ENCODE measurements at regions of chr6 and their contacts with region 1.

Region 1: GRCh38 chr6:30102970-30103874 is 9.7 kb downstream of the TRIM31 start:
- DNase-seq: peak; percentile 87
- H3K4me3 Mint-ChIP-seq: peak overlapping the region; percentile 77
- H3K27ac Mint-ChIP-seq: peak overlapping the region; percentile 73
- H3K4me1 Mint-ChIP-seq: peaks cover 42% of the 10 kb centered on the region
- H3K27me3 Mint-ChIP-seq: peaks cover 66% of the 10 kb centered on the region

Region 2: GRCh38 chr6:29976588-29977424 is 126.4 kb before region 1 on chr6:
- CTCF ChIA-PET with region 1: no interaction called
- POLR2A ChIA-PET with region 1: no interaction called
- DNase-seq: peak; percentile 66
- H3K4me3 Mint-ChIP-seq: peak overlapping the region; percentile 74
- H3K27ac Mint-ChIP-seq: peak overlapping the region; percentile 63
- H3K4me1 Mint-ChIP-seq: peaks cover 42% of the 10 kb centered on the region
- H3K27me3 Mint-ChIP-seq: peaks cover 67% of the 10 kb centered on the region

Region 3: DNA sequence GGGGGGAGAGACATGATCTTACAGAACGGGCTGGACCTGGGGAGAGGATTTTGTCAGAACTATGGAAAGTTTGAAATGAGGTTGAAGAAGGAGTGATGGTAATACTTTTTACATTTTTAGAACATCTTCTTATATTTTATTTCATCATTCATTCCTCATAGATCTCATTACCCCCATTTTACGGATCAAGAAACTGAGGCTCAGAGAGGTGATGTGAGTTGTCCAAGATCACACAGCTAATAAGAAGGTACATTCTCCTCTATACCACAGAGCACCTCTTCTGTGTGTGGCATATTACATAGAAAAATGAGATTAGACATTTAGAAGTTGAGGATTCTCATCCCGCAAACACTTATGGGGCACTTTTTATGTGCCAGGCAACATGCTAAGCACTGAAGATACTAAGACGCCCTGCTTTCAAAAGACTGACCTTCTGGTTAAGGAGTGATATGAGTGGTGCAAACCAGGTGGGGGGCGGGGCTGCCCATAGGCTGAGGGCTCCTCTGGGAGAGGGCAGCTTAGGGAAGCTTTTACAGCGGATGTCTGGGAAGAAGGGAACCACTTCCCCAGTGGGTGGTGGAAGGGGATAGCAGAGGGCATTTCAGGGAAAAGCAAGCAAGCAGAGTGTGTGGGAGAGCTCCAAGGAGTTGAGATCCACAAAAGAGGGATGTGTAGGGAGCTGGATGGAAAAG is 10.2 kb before region 1 on chr6:
- CTCF ChIA-PET with region 1: interaction called, 10 read pairs
- POLR2A ChIA-PET with region 1: no interaction called
- DNase-seq: no peak
- H3K4me3 Mint-ChIP-seq: no peak overlapping the region
- H3K27ac Mint-ChIP-seq: no peak overlapping the region
- H3K4me1 Mint-ChIP-seq: peaks cover 9% of the 10 kb centered on the region
- H3K27me3 Mint-ChIP-seq: peaks cover 74% of the 10 kb centered on the region

Region 4: DNA sequence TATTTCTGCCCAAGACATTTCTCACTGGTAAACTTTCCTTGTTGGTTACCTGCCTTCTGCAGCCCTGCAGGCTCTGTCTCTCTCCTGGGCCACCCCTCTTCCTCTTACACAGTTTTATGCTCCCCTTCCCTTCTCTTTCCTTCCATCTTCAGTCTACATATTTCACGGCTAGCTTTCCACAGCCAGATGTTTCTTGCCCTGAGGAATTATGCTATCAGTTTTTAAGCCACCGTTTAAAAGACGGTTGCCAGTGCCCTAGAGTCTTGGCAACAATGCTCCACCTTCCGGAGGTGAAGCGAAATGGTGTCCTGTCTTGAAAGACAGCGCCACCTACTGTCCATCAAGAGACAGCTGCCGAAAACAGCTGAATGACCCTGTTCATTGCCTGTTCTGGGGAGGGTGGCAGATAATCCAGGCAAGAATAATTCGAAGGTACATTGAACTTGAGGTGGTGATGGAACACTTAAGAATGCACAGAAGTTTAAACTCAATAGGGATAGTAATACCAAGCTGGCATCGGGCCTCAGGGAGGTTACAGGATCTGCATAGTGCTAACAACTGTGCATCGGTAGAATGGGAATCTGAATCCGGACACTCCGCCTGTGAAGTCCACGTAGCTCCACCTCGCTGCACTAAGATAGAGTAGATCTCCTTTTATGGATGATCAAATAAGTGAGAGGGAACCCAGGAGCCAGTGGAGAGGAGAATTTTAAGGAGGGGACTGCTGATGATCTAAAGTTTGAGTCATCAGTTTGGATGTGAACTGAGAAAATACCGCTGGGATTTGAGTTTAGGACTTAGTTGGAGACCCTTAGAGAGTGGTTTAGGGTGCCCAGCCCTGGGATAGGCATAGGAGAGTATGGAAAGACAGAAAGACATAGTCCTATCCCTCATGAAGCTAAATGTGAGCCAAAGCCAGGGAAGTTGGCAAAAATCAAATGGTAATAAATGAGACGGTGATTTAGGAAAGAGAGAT is 28.0 kb after region 1 on chr6:
- CTCF ChIA-PET with region 1: interaction called, 56 read pairs
- POLR2A ChIA-PET with region 1: no interaction called
- DNase-seq: peak; percentile 82
- H3K4me3 Mint-ChIP-seq: no peak overlapping the region
- H3K27ac Mint-ChIP-seq: no peak overlapping the region
- H3K4me1 Mint-ChIP-seq: peaks cover 17% of the 10 kb centered on the region
- H3K27me3 Mint-ChIP-seq: peaks cover 68% of the 10 kb centered on the region

Region 5: DNA sequence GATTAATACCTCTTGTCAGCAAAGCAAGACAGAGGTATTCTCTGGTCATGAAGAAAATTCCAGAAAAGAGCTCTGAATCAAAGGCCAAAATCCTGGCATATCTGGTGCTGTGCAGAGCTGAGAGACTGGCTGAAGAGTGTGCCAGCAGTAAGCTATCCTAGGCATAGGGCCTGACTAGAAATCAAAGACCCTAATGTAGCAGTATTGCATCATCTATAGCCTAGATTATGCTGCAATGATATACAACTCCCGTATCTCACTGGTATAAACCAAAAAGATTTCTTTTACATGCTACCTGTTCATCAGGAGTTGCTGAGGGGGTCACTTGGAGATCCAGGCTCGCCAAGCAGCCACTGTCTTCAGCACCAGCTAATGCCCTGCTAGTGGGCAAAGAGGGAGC is 192.6 kb after region 1 on chr6:
- CTCF ChIA-PET with region 1: no interaction called
- POLR2A ChIA-PET with region 1: no interaction called
- DNase-seq: no peak
- H3K4me3 Mint-ChIP-seq: no peak overlapping the region
- H3K27ac Mint-ChIP-seq: no peak overlapping the region
- H3K4me1 Mint-ChIP-seq: no peaks in the 10 kb centered on the region
- H3K27me3 Mint-ChIP-seq: no peaks in the 10 kb centered on the region